GM10248 (cell line): ENCODE measurements at regions of chr9 and their contacts with region 1.

Region 1: DNA sequence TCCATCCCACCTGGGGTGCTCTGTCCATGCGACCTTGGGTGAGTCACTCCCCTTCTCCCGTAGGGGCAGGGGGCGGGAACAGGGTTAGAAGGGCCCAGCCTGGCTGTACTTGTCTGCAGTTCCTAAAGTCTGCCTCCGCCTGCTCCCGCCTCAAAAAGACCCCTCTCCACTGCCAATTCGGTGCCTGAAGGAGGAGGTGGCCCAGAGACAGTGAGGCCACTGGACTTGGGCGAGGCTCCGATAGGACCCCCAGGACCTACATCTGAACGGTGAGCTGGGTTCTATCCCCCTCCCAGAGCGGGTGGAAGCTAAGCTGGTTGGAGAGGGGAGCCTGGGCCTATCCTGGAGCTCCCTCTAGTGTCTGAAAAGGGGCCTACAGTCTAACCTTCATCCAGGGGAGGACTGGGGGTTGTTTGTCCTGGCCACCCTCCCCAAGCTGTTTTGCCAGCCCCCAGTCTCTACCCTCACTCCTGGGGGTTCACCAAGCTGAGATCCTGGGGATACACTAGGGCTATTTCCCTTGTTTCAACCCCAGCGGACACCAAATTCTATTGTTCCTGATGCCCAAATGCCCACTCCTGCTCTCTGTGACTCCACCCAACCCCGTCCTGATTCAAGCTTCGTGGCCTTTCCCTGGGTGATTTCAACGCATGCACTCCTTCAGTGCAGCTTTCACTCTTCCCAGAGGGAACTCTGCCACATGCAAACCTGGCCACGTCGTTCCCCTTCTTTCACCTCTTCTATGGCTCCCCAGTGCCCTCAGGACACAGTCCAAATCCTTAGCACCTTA is 6.1 kb upstream of the CRB2 start:
- DNase-seq: peak; percentile 83
- CTCF ChIP-seq: peak; percentile 84

Region 2: DNA sequence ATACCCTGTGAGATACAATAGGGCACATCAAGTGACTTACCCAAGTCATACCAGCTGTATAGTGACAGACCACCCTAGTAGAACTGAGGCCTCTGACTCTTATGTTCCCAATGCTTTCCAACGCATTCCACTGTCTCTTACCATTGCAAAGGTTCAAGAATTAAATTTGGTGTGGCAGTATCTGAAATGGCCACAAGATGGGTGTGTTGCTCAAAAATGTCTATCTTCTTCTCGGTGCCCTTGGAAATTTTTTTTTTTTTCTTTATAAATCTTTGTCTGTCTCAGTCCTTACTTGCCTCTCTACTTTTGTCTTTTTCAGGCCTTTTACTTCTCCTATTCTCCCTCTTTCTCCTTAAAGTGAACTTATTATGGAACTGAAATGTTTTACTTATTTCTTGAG is 268.1 kb before region 1 on chr9:
- CTCF ChIA-PET with region 1: interaction called, 65 read pairs
- POLR2A ChIA-PET with region 1: no interaction called
- DNase-seq: no peak
- CTCF ChIP-seq: peak; percentile 48

Region 3: DNA sequence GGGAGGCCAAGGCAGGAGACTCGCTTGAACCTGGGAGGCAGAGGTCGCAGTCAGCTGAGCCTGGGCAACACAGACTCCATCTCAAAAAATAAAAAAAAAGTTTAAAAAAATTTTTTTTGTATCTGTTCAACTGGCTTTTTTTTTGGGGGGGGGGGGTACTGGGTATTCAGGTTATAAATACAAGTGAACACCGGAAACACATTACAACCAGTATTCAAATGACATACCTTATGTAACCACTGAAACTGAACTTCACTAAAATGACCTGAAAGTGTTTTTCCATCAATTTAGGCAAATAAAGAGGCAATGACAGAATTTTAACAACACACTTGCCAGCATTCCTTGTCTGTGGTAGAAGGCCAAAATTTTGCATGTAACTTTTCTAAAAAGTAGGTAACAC is 115.0 kb before region 1 on chr9:
- CTCF ChIA-PET with region 1: interaction called, 10 read pairs
- POLR2A ChIA-PET with region 1: no interaction called
- DNase-seq: peak; percentile 39
- CTCF ChIP-seq: no peak

Region 4: GRCh38 chr9:123338710-123339665 is 10.9 kb before region 1 on chr9:
- CTCF ChIA-PET with region 1: interaction called, 34 read pairs
- POLR2A ChIA-PET with region 1: no interaction called
- DNase-seq: peak; percentile 71
- CTCF ChIP-seq: no peak

Region 5: GRCh38 chr9:123389070-123389469 is 39.2 kb after region 1 on chr9:
- CTCF ChIA-PET with region 1: interaction called, 82 read pairs
- POLR2A ChIA-PET with region 1: no interaction called
- DNase-seq: no peak
- CTCF ChIP-seq: no peak